CD4-positive, alpha-beta memory T cell (primary cell): ENCODE measurements at regions of chr6 and their contacts with region 1.

Region 1: DNA sequence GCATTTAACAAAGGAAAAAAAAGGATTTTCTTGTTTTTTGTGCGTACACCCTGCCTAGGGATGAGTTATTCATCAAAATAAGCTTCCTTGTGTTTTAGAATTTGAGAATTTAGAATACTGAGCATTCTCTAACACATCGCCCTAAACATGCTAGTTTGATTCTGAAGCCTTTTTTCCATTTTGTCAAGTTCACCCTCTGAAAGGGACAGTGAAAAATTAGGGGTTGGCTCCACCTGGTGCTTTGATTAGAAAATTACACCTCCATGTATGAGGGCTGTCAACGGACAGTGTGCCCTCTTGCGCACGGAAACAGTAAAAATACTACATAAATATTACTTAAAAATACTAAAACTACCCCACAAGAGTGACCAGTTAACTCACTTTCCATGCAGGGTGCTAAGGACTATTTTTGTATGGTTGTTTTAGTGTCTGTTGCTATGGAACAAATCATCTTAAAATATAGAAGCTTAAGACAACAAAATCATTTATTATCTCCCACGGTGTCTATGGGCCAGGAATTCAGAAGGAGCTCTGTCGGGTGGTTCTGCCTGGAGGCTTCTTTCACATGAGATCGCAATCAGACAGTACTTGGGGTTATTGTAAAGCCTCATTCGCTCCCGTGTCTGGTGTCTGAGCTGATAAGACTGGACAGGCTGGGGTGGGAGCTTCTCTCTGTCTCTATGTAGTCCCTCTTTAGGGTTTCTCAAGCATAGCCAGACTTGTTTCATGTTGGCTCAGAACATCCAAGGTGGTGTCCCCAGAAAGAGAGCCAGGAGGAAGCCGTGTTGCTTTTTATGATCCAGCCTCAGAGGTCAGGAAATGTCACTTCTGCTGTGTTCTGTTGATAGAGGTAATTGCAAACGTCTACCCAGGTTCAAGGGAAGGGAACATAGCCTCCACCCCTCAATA is 41.1 kb upstream of the TMEM170B start:
- DNase-seq: peak; percentile 79 to 82 (median 80)
- H3K4me3 ChIP-seq: no peak overlapping the region
- H3K4me3 Mint-ChIP-seq: no peak overlapping the region
- H3K27ac ChIP-seq: no peak overlapping the region
- H3K27ac Mint-ChIP-seq: no peak overlapping the region
- H3K4me1 ChIP-seq: peaks cover 5% of the 10 kb centered on the region
- H3K4me1 Mint-ChIP-seq: peaks cover 0 to 1% (median 0%) of the 10 kb centered on the region in 4 donors
- H3K27me3 ChIP-seq: no peaks in the 10 kb centered on the region
- H3K27me3 Mint-ChIP-seq: no peaks in the 10 kb centered on the region

Region 2: GRCh38 chr6:11139056-11139960 is 357.1 kb before region 1 on chr6:
- CTCF ChIA-PET with region 1: interaction called, 167 read pairs
- POLR2A ChIA-PET with region 1: interaction called, 3 read pairs
- intact Hi-C with region 1: no loop called
- DNase-seq: no peak
- H3K4me3 ChIP-seq: no peak overlapping the region
- H3K4me3 Mint-ChIP-seq: no peak overlapping the region
- H3K27ac ChIP-seq: no peak overlapping the region
- H3K27ac Mint-ChIP-seq: no peak overlapping the region
- H3K4me1 ChIP-seq: no peaks in the 10 kb centered on the region
- H3K4me1 Mint-ChIP-seq: peaks cover 0 to under 1% (median 0%) of the 10 kb centered on the region in 4 donors
- H3K27me3 ChIP-seq: no peaks in the 10 kb centered on the region
- H3K27me3 Mint-ChIP-seq: no peaks in the 10 kb centered on the region

Region 3: DNA sequence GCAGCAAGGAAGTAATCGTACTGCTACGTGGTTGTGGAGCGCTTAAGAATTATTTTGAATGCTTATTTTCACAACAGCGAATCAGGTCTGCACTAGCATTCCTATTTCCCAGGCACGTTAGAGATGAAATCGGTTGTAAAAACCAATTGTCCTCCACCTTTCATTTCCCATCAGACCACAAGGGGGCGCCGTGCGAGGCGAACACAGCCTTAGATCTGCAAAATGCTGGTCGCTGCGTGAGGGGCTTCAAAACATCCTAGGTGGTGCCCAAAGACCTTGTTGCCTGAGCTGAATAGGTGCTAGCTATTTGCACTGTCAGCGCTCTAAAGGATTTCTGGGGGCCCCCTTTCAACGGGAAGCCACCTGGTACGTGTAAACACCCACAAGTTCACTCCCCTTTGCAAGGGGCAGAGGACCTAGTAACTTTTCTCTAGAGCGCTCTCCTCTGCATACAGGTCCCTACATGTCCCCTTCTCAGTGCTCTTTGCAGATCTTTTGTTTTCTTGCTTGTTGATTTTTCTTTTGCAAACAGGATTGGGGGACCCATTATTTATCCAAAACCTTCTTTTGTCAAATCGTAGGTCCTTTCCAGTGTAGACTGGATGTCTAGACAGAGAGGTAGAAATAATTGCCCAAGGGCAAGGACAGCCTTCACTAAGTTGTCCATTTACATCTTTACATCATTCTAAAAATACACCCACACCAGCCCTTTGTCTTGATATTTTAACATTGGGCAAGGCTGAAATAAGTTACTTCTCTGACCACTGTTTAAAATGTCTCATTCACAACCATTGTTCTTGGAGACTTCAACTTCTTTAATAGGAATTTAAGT is 323.7 kb before region 1 on chr6:
- CTCF ChIA-PET with region 1: interaction called, 218 read pairs
- POLR2A ChIA-PET with region 1: no interaction called
- intact Hi-C with region 1: loop called (anchors 1 kb)
- DNase-seq: peak; percentile 56 to 72 (median 65)
- H3K4me3 ChIP-seq: peak overlapping the region in 1 of 2 donors; percentile 9
- H3K4me3 Mint-ChIP-seq: peak overlapping the region; percentile 16 to 78 (median 64)
- H3K27ac ChIP-seq: no peak overlapping the region
- H3K27ac Mint-ChIP-seq: peak overlapping the region in 4 of 7 donors; percentile 3 to 65 (median 30)
- H3K4me1 ChIP-seq: peaks cover 12% of the 10 kb centered on the region
- H3K4me1 Mint-ChIP-seq: peaks cover 9 to 20% (median 10%) of the 10 kb centered on the region in 4 donors
- H3K27me3 ChIP-seq: no peaks in the 10 kb centered on the region
- H3K27me3 Mint-ChIP-seq: no peaks in the 10 kb centered on the region

Region 4: GRCh38 chr6:11198663-11199603 is 297.5 kb before region 1 on chr6:
- CTCF ChIA-PET with region 1: interaction called, 12 read pairs
- POLR2A ChIA-PET with region 1: no interaction called
- intact Hi-C with region 1: no loop called
- DNase-seq: peak; percentile 60 to 77 (median 72)
- H3K4me3 ChIP-seq: peak overlapping the region in 1 of 2 donors; percentile 27
- H3K4me3 Mint-ChIP-seq: peak overlapping the region; percentile 33 to 80 (median 63)
- H3K27ac ChIP-seq: peak overlapping the region; percentile 52
- H3K27ac Mint-ChIP-seq: peak overlapping the region; percentile 79 to 97 (median 94)
- H3K4me1 ChIP-seq: peaks cover 53% of the 10 kb centered on the region
- H3K4me1 Mint-ChIP-seq: peaks cover 40 to 72% (median 59%) of the 10 kb centered on the region in 4 donors
- H3K27me3 ChIP-seq: no peaks in the 10 kb centered on the region
- H3K27me3 Mint-ChIP-seq: no peaks in the 10 kb centered on the region

Region 5: DNA sequence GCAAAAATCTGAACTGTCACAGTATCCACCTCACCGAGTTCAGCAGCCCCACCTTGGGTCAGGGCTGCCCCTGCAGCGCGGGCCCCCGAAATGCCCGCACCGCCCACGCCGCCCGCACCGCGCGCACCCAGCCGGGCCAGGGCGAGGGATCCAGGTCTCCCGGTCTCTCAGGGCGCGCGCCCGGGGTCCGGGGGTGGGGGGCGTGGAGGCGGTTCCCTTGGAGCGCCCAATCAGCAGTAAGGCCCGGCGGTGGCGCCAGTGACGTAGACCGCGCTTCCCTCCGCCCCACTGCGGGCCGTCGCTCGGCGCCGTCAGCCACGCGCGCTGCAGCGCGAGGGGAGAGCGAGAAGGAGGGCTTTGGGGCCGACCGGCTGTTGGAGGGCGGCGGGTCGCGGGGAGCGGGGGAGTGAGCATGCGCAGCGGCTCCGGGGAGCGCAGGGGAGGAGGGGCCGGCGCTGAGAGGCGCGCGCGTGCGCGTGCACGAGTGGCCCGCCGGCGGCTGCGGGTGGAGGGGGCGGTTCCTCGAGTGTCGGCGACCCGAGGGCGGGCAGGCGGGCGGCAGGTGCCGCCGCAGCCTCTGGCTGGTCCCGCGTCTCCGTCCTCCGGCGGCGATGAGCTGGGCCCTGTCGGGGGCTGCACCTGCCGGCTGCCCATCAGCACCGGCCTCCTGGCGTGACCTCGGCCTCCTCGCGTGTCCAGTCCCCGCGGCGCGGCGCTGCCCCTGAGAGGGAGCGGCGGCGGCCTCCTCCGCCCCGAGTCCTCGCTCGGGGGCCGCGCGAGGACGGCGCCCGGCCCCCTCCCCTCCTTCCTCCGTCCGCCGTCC is 41.0 kb after region 1 on chr6 and contains the start of gene TMEM170B:
- CTCF ChIA-PET with region 1: no interaction called
- POLR2A ChIA-PET with region 1: no interaction called
- intact Hi-C with region 1: loop called (anchors 2 kb)
- DNase-seq: peak; percentile 94 to 98 (median 97)
- H3K4me3 ChIP-seq: peak within 1 kb of the TSS; percentile 60 to 77
- H3K4me3 Mint-ChIP-seq: peak within 1 kb of the TSS; percentile 86 to 92 (median 90)
- H3K27ac ChIP-seq: peak within 1 kb of the TSS; percentile 54
- H3K27ac Mint-ChIP-seq: peak within 1 kb of the TSS; percentile 72 to 94 (median 92)
- H3K4me1 ChIP-seq: peaks cover 11% of the 10 kb centered on the region
- H3K4me1 Mint-ChIP-seq: peaks cover 7 to 24% (median 9%) of the 10 kb centered on the region in 4 donors
- H3K27me3 ChIP-seq: no peaks in the 10 kb centered on the region
- H3K27me3 Mint-ChIP-seq: peaks cover 2 to 4% of the 10 kb centered on the region in 2 donors
- total RNA-seq, gene TMEM170B: 1.9 to 2.1 TPM

Region 6: DNA sequence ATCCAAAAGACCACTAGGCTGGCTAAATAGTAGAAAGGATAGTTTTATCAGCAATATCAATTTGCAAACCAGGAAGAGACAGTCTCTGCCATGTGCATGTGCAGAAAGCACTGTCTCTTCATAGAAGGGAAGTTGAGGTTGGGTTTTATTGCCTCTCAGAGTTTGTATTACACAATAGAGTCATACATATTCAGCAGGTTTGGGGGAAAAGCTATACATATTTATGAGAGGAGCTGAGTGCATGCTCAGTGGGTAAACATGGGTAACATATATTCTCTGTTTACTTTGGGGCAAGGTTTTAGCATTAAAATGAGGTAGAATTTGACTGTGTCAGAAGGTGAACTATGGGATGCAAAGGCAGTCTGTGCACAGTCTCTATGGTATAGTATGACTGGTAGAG is 56.0 kb after region 1 on chr6:
- CTCF ChIA-PET with region 1: no interaction called
- POLR2A ChIA-PET with region 1: no interaction called
- intact Hi-C with region 1: no loop called
- DNase-seq: no peak
- H3K4me3 ChIP-seq: no peak overlapping the region
- H3K4me3 Mint-ChIP-seq: no peak overlapping the region
- H3K27ac ChIP-seq: no peak overlapping the region
- H3K27ac Mint-ChIP-seq: no peak overlapping the region
- H3K4me1 ChIP-seq: no peaks in the 10 kb centered on the region
- H3K4me1 Mint-ChIP-seq: no peaks in the 10 kb centered on the region
- H3K27me3 ChIP-seq: no peaks in the 10 kb centered on the region
- H3K27me3 Mint-ChIP-seq: no peaks in the 10 kb centered on the region